MCF 10A (cell line): ENCODE measurements at regions of chr2 and their contacts with region 1.

Region 1: GRCh38 chr2:714005-714741 is 37.0 kb upstream of the TMEM18 start:
- DNase-seq: peak; percentile 75
- H3K4me3 Mint-ChIP-seq: no peak overlapping the region
- H3K27ac Mint-ChIP-seq: no peak overlapping the region
- H3K4me1 Mint-ChIP-seq: peaks cover 5% of the 10 kb centered on the region
- H3K27me3 Mint-ChIP-seq: peaks cover 28% of the 10 kb centered on the region
- CTCF ChIP-seq: peak; percentile 65

Region 2: GRCh38 chr2:275466-275865 is 438.7 kb before region 1 on chr2:
- CTCF ChIA-PET with region 1: no interaction called
- POLR2A ChIA-PET with region 1: no interaction called
- intact Hi-C with region 1: no loop called
- DNase-seq: no peak
- H3K4me3 Mint-ChIP-seq: no peak overlapping the region
- H3K27ac Mint-ChIP-seq: no peak overlapping the region
- H3K4me1 Mint-ChIP-seq: peaks cover 10% of the 10 kb centered on the region
- H3K27me3 Mint-ChIP-seq: no peaks in the 10 kb centered on the region
- CTCF ChIP-seq: no peak

Region 3: DNA sequence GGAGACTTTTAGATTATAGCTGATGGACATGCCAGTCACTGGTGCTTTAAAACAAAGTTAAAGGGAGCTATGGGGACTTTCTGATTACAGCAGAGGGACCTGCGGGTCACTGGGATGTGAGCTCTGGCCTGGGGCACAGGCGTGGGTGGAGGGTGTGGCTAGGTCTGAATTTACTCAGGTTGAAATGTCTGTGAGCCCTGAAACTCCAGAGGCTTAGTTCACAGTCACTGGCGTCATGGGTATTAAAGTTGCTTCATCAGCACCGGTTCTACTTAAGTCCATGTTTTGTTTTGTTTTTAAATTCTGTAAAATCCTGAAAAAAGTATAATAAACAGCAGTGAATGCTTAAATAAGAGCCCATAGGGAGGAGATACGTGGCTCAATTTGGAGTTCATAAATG is 12.0 kb after region 1 on chr2:
- CTCF ChIA-PET with region 1: interaction called, 10 read pairs
- POLR2A ChIA-PET with region 1: no interaction called
- intact Hi-C with region 1: no loop called
- DNase-seq: peak; percentile 25
- H3K4me3 Mint-ChIP-seq: no peak overlapping the region
- H3K27ac Mint-ChIP-seq: peak overlapping the region; percentile 6
- H3K4me1 Mint-ChIP-seq: peaks cover 12% of the 10 kb centered on the region
- H3K27me3 Mint-ChIP-seq: peaks cover 14% of the 10 kb centered on the region
- CTCF ChIP-seq: no peak

Region 4: GRCh38 chr2:741195-741496 is 27.0 kb after region 1 on chr2:
- CTCF ChIA-PET with region 1: interaction called, 11 read pairs
- POLR2A ChIA-PET with region 1: no interaction called
- intact Hi-C with region 1: no loop called
- DNase-seq: no peak
- H3K4me3 Mint-ChIP-seq: peak overlapping the region; percentile 79
- H3K27ac Mint-ChIP-seq: no peak overlapping the region
- H3K4me1 Mint-ChIP-seq: no peaks in the 10 kb centered on the region
- H3K27me3 Mint-ChIP-seq: peaks cover 21% of the 10 kb centered on the region
- CTCF ChIP-seq: no peak

Region 5: DNA sequence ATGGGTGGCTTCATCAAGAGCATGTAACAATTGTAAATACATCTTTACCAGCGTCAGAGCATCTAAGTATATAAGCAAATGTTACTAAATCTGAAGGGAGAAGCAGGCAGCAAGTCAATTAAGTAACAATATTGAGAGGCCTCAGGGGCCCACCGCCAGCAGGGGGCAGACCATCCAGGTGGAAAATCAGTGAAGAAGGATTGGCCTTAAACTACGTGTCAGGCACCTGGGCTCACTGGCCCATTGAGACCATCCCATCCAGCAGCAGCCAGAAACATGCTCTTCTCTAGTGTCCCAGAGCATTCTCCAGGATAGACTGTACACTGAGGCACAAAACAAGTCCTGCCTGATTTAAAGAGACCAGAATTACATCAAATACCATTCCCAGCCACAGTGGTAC is 140.3 kb after region 1 on chr2:
- CTCF ChIA-PET with region 1: interaction called, 4 read pairs
- POLR2A ChIA-PET with region 1: no interaction called
- intact Hi-C with region 1: loop called (anchors 2 kb)
- DNase-seq: peak; percentile 30
- H3K4me3 Mint-ChIP-seq: no peak overlapping the region
- H3K27ac Mint-ChIP-seq: no peak overlapping the region
- H3K4me1 Mint-ChIP-seq: no peaks in the 10 kb centered on the region
- H3K27me3 Mint-ChIP-seq: no peaks in the 10 kb centered on the region
- CTCF ChIP-seq: peak; percentile 54

Region 6: DNA sequence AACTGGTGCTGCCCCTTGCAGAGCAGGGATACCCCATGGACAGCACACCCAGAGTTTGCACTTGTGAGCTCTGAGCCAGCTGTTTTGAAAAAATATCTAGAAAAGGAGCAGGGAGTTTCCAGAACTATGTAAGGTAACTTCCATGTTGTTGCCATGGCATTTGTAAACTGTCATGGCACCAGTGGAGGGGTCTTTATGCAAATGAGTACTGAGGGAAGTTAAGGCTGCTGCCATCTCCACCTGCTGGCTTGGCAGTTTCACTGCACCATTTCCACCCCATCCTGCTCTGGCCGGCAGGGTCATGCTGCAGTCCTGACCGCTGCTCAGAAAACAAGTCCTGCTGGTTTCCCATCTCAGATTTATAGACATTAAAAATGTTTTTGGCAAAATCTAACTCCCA is 184.1 kb after region 1 on chr2:
- CTCF ChIA-PET with region 1: no interaction called
- POLR2A ChIA-PET with region 1: no interaction called
- intact Hi-C with region 1: loop called (anchors 10 kb)
- DNase-seq: no peak
- H3K4me3 Mint-ChIP-seq: no peak overlapping the region
- H3K27ac Mint-ChIP-seq: no peak overlapping the region
- H3K4me1 Mint-ChIP-seq: peaks cover under 1% of the 10 kb centered on the region
- H3K27me3 Mint-ChIP-seq: no peaks in the 10 kb centered on the region
- CTCF ChIP-seq: no peak

Region 7: DNA sequence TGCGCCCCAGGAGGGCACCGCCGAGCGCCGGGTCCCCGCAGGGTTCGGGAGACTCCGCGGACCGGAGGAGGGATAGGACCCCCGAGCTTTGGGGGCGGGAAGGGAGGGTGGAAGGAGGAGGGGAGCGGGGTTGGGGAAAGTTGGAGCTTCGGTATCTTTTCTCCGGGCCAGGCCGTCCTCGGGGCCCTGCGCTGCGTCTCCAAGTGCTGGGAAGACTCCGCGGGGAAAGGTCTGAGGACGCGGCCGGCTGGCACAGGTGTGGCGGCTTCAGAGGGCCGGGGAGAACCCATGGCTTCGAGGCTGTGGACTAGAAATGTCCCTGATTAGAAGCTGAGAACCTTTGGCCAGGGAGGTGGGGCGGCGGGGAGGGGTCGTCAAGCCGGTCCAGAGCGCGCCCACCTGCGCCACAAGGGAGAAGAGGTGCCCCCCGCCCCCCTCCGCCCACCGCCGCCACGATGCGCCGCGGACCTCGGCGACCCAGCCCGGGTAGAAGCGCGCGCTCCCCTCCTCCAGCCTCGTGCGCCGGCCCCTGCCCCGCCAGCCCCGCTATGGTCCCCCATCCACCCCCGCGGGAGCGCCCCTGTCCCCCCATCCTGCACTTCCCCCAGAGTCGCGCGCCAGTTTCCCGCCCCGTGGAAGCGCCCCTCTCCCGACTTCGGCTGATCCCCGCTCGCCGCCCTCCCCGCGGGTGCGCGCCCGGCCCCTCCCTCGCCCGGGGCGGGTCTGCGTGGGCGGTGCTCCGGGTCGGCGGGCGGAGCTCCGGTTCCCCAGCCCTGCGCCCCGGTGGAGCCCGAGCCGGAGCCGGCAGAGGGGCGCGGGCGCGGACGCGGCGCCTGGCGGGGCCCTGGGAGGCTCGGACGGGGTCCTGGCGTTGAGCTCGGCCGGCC is 236.2 kb after region 1 on chr2 and contains the start of gene SNTG2:
- CTCF ChIA-PET with region 1: interaction called, 10 read pairs
- POLR2A ChIA-PET with region 1: no interaction called
- intact Hi-C with region 1: loop called (anchors 5 kb)
- DNase-seq: no peak
- H3K4me3 Mint-ChIP-seq: peak within 1 kb of the TSS; percentile 19
- H3K27ac Mint-ChIP-seq: no peak within 1 kb of the TSS
- H3K4me1 Mint-ChIP-seq: no peaks in the 10 kb centered on the region
- H3K27me3 Mint-ChIP-seq: peaks cover 11% of the 10 kb centered on the region
- CTCF ChIP-seq: no peak
- total RNA-seq, gene SNTG2: not detected in 2 replicates

Region 8: GRCh38 chr2:1024981-1025380 is 310.8 kb after region 1 on chr2:
- CTCF ChIA-PET with region 1: no interaction called
- POLR2A ChIA-PET with region 1: no interaction called
- intact Hi-C with region 1: no loop called
- DNase-seq: no peak
- H3K4me3 Mint-ChIP-seq: no peak overlapping the region
- H3K27ac Mint-ChIP-seq: no peak overlapping the region
- H3K4me1 Mint-ChIP-seq: peaks cover 12% of the 10 kb centered on the region
- H3K27me3 Mint-ChIP-seq: peaks cover 13% of the 10 kb centered on the region
- CTCF ChIP-seq: no peak

Region 9: DNA sequence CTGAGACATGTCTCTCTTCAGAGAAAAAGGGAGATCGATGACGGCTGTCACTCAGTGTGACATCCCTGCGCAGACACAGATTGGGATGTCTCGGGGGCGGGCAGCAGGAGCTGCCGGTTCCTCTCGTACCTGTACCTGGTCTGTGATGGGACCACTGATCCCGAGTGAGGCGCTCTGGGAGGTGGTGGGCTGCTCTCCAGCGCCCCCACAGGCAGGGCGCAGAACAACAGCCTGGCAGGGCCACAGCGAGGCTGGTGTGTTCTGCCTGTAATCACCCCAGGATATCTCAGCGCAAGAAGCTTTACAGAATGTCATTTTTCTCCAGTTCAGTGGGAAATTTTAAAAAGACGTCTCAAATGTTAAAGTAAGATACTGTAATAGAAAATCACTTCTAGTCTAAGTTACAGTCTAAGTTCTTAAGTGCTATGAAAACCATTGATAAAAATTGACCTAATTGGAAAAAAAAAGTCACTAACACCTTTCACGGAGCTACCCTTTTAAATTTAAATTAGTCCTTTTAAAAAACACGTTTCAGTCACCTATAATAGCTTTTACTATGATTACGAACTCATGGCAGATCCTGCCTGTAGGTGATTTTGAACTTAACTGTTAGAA is 426.3 kb after region 1 on chr2:
- CTCF ChIA-PET with region 1: interaction called, 3 read pairs
- POLR2A ChIA-PET with region 1: interaction called, 3 read pairs
- intact Hi-C with region 1: loop called (anchors 2 kb)
- DNase-seq: peak; percentile 26
- H3K4me3 Mint-ChIP-seq: no peak overlapping the region
- H3K27ac Mint-ChIP-seq: no peak overlapping the region
- H3K4me1 Mint-ChIP-seq: no peaks in the 10 kb centered on the region
- H3K27me3 Mint-ChIP-seq: no peaks in the 10 kb centered on the region
- CTCF ChIP-seq: peak; percentile 94